Activated CD4-positive, alpha-beta T cell treated with anti-CD3 and anti-CD28 coated beads for 36 hours (primary cell): ENCODE measurements at regions of chr15 and their contacts with region 1.

Region 1: GRCh38 chr15:34109797-34110663 is 8.1 kb downstream of the PGBD4 start:
- DNase-seq: no peak
- ATAC-seq: peak; percentile 60
- H3K4me3 Mint-ChIP-seq: no peak overlapping the region
- H3K27ac Mint-ChIP-seq: no peak overlapping the region
- H3K4me1 Mint-ChIP-seq: no peaks in the 10 kb centered on the region
- H3K27me3 Mint-ChIP-seq: peaks cover 2% of the 10 kb centered on the region

Region 2: GRCh38 chr15:34122771-34123183 is 12.7 kb after region 1 on chr15:
- CTCF ChIA-PET with region 1: interaction called, 17 read pairs
- POLR2A ChIA-PET with region 1: no interaction called
- intact Hi-C with region 1: no loop called
- DNase-seq: no peak
- ATAC-seq: no peak
- H3K4me3 Mint-ChIP-seq: no peak overlapping the region
- H3K27ac Mint-ChIP-seq: no peak overlapping the region
- H3K4me1 Mint-ChIP-seq: no peaks in the 10 kb centered on the region
- H3K27me3 Mint-ChIP-seq: peaks cover 5% of the 10 kb centered on the region